ENCODE measurements at regions of chr11 and their contacts with region 1.

Region 1: GRCh38 chr11:61792310-61793085 is at the starts of genes FEN1 and TMEM258:
- DNase-seq: peak; percentile 62
- H3K4me3 ChIP-seq: peak within 1 kb of the TSS; percentile 49 to 89 (median 76)
- H3K27ac ChIP-seq: peak within 1 kb of the TSS; percentile 89 to 99 (median 95)
- H3K4me1 ChIP-seq: peaks cover 12 to 44% (median 20%) of the 10 kb centered on the region in 3 donors
- H3K27me3 ChIP-seq: no peaks in the 10 kb centered on the region
- CTCF ChIP-seq: peak in 3 of 6 experiments; percentile 3 to 29 (median 27)
- POLR2A ChIP-seq: peak in 2 of 4 donors; percentile 36 to 69
- total RNA-seq, gene FEN1: 11.4 to 38.1 (median 23.5) TPM
- total RNA-seq, gene TMEM258: 32.3 to 54.2 (median 37.9) TPM

Region 2: GRCh38 chr11:62108017-62108750 is 315.7 kb after region 1 on chr11:
- intact Hi-C with region 1: loop called (anchors 10 kb)
- DNase-seq: no peak
- H3K4me3 ChIP-seq: no peak overlapping the region
- H3K27ac ChIP-seq: no peak overlapping the region
- H3K4me1 ChIP-seq: peaks cover 7 to 35% (median 8%) of the 10 kb centered on the region in 3 donors
- H3K27me3 ChIP-seq: no peaks in the 10 kb centered on the region
- CTCF ChIP-seq: peak; percentile 67 to 87 (median 86)
- POLR2A ChIP-seq: no peak

Measured in esophagus squamous epithelium (tissue), 5 donors.